ENCODE measurements at regions of chr11 and their contacts with region 1.

Region 1: DNA sequence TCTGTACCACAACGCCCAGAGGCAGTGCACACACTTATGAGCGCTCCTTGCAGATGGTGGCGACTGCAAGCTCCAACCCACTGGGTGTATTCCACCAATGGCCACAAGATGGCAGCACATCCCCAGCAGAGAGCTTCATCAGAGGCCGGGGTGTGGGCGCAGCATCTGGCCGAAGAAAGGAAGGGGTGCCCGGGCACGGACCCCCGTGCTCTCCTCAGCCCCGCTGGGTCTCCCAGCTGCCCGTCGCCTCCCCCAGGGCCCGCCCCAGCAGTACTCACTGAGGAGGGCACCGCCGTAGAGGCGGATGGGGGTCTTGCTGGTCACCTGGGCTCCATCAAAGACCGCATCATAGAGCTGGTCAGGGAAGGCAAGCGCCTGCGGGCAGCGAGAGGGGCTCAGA is 14.2 kb downstream of the TP53I11 start:
- DNase-seq: peak in 2 of 3 donors; percentile 88 to 92
- ATAC-seq: peak; percentile 81
- H3K4me3 ChIP-seq: no peak overlapping the region
- H3K4me1 ChIP-seq: no peaks in the 10 kb centered on the region
- CTCF ChIP-seq: peak; percentile 79

Region 2: DNA sequence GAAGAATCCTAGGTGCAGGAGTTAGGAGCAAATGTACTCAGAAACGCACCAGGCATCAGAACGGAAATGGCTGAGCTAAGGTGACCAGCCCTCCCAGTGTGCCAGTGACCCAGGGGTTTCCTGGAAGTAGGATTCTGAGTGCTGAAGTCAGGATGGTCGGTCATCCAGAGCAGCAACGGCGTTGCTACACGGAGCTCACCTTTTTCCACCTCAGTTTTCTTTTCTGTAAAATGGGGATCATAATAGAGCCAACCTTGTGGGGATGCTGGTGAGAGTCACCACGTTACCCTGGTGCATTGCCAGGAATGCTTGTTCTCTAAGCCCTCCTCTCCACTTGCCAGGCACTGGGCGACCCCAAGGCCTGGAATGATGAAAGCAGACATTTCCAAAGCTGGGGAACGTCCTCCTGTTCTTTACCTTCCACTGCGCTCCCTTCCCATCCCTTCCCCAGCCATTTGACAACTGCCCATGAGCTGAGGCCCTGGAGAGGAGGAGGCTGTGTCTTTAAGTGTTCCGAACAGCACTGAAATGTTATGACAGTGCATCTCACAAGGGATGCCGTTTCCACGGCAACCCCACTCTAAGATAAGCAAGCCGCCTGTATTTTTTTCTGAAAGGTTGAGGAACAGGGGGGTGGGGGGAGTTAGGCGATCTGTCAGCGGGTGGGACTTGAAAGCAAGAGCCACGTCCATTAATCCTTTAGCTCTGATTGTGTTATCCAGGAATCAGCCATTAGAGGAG is 143.0 kb before region 1 on chr11:
- intact Hi-C with region 1: no loop called
- DNase-seq: no peak
- ATAC-seq: peak; percentile 20
- H3K4me3 ChIP-seq: no peak overlapping the region
- H3K4me1 ChIP-seq: no peaks in the 10 kb centered on the region
- CTCF ChIP-seq: no peak

Region 3: DNA sequence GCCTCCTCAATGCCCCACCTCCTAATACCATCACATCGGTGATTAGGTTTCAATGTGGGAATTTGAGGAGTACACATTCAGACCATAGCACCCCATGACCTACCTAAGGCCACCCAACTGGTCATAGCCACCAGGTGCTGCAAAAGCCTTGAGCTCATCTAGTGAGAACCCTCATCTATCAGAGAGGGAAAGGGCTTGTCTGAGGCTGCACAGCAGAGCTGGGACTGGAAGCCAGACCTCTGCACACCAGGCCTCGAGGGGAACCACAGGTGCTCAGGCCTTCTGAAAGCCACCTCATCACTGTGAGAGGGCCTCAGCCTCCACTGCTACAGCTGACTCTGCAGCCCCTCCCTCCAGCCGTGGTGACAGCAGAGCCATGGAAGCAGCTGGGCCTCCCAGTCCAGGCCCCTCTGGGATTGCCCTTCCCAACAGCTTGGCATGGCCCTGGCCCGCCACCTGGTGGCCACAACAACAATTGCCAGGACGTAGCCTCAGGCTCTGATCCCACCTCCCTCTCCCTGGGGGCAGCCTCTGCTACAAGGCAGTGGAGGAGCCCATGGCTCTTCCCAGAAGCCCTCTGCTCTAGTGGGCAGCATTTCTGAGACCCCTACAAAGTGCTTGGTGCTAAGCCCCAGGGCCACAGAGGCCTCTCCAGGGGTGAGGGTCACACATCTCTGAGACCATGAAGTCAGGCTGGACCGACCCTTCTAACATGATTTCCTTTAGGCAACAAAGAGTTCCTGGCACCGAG is 168.9 kb after region 1 on chr11:
- intact Hi-C with region 1: loop called (anchors 2 kb)
- DNase-seq: peak; percentile 72 to 81 (median 75)
- ATAC-seq: peak; percentile 76
- H3K4me3 ChIP-seq: no peak overlapping the region
- H3K4me1 ChIP-seq: no peaks in the 10 kb centered on the region
- CTCF ChIP-seq: peak; percentile 93

Region 4: GRCh38 chr11:45225277-45225676 is 288.8 kb after region 1 on chr11:
- intact Hi-C with region 1: no loop called
- DNase-seq: no peak
- ATAC-seq: no peak
- H3K4me3 ChIP-seq: no peak overlapping the region
- H3K4me1 ChIP-seq: no peaks in the 10 kb centered on the region
- CTCF ChIP-seq: no peak

Region 5: DNA sequence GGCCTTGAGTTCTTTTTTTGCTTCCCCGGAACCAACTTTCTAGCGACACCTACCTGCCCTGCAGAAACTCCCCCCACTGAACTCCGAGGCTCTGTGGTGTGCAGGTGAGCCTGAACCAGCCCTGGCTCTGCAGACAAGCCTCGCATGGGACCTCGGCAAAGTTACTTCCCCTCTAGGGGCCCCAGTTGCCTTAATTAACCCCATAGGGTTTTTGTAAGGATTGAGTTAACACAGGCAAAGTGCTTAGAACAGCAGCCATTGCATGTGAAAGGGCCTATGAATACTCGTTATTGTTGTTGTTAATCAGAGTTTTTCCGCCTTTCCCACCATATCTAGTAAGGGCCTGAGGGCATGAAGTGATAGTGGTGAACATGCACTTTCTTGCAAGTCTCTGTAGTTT is 362.2 kb after region 1 on chr11:
- intact Hi-C with region 1: loop called in 1 of 2 experiments (anchors 10 kb)
- DNase-seq: no peak
- ATAC-seq: no peak
- H3K4me3 ChIP-seq: no peak overlapping the region
- H3K4me1 ChIP-seq: no peaks in the 10 kb centered on the region
- CTCF ChIP-seq: no peak